ENCODE measurements at regions of chr4 and their contacts with region 1.

Region 1: GRCh38 chr4:146522098-146522868 is 543 bp upstream of the SLC10A7 start:
- DNase-seq: peak; percentile 88
- H3K4me3 Mint-ChIP-seq: no peak overlapping the region
- H3K27ac Mint-ChIP-seq: peak overlapping the region; percentile 57
- H3K4me1 Mint-ChIP-seq: peaks cover 19% of the 10 kb centered on the region
- H3K27me3 Mint-ChIP-seq: no peaks in the 10 kb centered on the region

Region 2: GRCh38 chr4:145936142-145936996 is 585.9 kb before region 1 on chr4:
- CTCF ChIA-PET with region 1: no interaction called
- POLR2A ChIA-PET with region 1: no interaction called
- intact Hi-C with region 1: loop called (anchors 5 kb)
- DNase-seq: peak; percentile 72
- H3K4me3 Mint-ChIP-seq: peak overlapping the region; percentile 90
- H3K27ac Mint-ChIP-seq: peak overlapping the region; percentile 97
- H3K4me1 Mint-ChIP-seq: peaks cover 43% of the 10 kb centered on the region
- H3K27me3 Mint-ChIP-seq: peaks cover 1% of the 10 kb centered on the region

Region 3: DNA sequence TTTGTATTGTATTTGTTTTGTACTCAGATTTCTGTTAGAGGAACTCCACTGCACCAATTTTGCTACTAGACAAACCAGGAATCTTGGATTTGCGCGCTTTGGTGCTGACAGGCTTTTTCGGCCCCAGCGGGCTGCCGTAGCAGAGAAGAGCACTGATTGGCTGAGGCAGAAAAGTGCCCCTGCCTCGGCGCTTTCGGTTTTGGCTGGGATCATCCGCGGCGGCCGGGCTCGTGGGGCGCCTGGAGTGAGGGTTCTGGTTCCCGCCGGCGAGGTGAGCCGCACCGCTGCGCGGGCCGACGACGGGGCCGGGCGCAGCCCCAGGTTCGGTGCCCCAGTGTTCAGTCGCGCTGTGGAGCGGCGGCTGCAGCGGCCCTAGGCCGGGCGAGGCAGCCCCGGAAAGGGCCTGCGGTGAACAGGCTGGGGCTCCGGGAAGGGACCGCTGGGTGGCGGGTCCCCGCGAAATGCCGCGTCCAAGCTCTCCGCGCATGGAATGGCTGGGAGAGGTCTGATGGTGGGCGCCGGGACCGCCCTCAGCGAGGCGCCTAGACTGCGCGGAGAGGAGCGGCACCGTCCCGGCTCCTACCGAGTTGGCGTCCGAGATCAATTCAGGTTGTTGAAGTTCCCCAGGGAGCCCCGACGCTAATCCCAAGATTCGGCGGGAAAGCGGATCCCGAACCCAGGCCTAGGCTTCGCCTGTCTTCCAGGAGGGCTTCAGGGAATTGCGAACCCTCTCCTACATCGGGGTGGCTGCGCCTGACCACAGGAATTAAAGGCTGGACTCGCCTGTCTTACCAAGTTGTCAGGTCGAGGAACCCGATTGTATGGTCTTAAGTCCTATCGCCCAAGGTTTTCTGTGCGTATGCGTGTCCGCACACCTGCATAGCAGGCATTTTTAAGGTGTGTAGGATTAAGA is 346.5 kb before region 1 on chr4 and contains the start of gene LSM6:
- CTCF ChIA-PET with region 1: interaction called, 3 read pairs
- POLR2A ChIA-PET with region 1: no interaction called
- intact Hi-C with region 1: loop called (anchors 5 kb)
- DNase-seq: peak; percentile 89
- H3K4me3 Mint-ChIP-seq: peak within 1 kb of the TSS; percentile 83
- H3K27ac Mint-ChIP-seq: peak within 1 kb of the TSS; percentile 87
- H3K4me1 Mint-ChIP-seq: peaks cover 42% of the 10 kb centered on the region
- H3K27me3 Mint-ChIP-seq: no peaks in the 10 kb centered on the region
- total RNA-seq, gene LSM6: 64.2 to 65.5 TPM

Region 4: DNA sequence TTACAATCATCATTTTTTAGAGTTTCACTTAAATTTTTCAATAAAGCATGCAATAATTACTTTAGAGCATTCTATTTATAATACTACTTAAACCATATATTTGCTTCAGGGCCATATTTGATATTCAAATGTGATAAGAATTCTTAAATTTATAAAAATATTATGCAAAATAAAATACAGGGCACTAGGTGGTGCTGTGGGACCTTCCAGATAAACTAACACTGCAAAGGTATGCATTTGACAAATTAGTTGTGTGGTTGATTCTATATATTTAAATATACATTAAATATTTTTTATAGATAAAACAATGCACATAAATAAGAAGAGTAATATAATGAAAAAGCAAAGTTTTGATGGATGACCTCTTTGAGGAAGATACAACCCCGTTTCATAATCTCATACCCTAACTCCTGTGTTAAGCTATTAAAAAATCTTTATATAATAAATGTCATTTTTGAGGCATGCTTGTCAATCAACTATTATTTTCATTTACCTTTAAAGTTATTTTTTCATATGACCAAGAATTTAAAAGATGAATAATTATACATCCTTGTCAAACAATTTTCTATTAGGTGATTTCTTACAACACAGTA is 179.6 kb before region 1 on chr4:
- CTCF ChIA-PET with region 1: no interaction called
- POLR2A ChIA-PET with region 1: no interaction called
- intact Hi-C with region 1: loop called (anchors 1 kb)
- DNase-seq: peak; percentile 27
- H3K4me3 Mint-ChIP-seq: no peak overlapping the region
- H3K27ac Mint-ChIP-seq: no peak overlapping the region
- H3K4me1 Mint-ChIP-seq: peaks cover 3% of the 10 kb centered on the region
- H3K27me3 Mint-ChIP-seq: no peaks in the 10 kb centered on the region

Region 5: GRCh38 chr4:146495277-146495676 is 27.0 kb before region 1 on chr4:
- CTCF ChIA-PET with region 1: no interaction called
- POLR2A ChIA-PET with region 1: no interaction called
- intact Hi-C with region 1: loop called (anchors 1 kb)
- DNase-seq: no peak
- H3K4me3 Mint-ChIP-seq: no peak overlapping the region
- H3K27ac Mint-ChIP-seq: no peak overlapping the region
- H3K4me1 Mint-ChIP-seq: peaks cover 22% of the 10 kb centered on the region
- H3K27me3 Mint-ChIP-seq: no peaks in the 10 kb centered on the region

Region 6: GRCh38 chr4:146654687-146655520 is 132.6 kb after region 1 on chr4:
- CTCF ChIA-PET with region 1: no interaction called
- POLR2A ChIA-PET with region 1: no interaction called
- intact Hi-C with region 1: no loop called
- DNase-seq: no peak
- H3K4me3 Mint-ChIP-seq: peak overlapping the region; percentile 43
- H3K27ac Mint-ChIP-seq: no peak overlapping the region
- H3K4me1 Mint-ChIP-seq: peaks cover 14% of the 10 kb centered on the region
- H3K27me3 Mint-ChIP-seq: peaks cover 51% of the 10 kb centered on the region

Measured in activated CD4-positive, alpha-beta memory T cell treated with anti-CD3 and anti-CD28 coated beads for 36 hours (primary cell).